OCI-LY7 (cell line): ENCODE measurements at regions of chr6 and their contacts with region 1.

Region 1: DNA sequence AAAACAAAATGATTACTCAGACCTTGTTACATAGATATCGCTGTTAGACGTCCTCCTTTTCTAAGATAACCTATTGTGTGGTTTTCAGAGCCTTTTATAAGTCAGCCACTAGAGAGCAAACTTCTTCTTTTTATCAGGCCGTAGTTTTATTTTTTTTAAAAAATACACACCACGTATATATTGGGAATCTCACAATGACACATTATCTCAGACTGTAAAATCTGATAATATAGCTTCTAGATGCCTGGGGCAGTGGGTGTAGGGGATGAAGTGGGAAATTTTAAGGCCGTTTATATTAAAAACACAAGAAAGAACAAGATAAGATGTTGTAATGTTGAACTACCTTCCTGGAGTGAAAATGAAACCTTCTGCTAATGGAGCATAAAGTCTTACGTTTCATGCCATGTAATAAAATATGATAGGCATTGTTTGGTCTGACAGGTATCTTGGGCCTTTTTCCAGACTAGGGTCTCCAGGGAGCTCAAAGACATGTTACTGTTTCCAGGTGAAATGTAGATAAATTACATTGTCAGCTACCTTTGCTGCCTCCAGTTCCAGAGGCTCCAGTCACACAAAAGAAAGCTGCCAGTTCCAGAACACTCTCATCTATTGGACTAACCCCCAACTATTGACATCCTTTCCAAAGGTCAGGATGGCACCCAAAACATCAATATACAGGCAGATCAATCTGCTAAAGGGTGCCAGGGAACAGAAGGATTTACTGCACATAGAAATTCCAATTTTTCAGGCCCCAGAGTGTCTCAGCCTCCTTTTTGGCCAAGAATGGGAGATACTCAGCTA is 130.2 kb upstream of the AKIRIN2 start:
- DNase-seq: peak; percentile 84
- H3K4me3 ChIP-seq: peak overlapping the region; percentile 42
- H3K27ac ChIP-seq: peak overlapping the region; percentile 81
- H3K4me1 ChIP-seq: peaks cover 68% of the 10 kb centered on the region
- CTCF ChIP-seq: peak; percentile 98

Region 2: DNA sequence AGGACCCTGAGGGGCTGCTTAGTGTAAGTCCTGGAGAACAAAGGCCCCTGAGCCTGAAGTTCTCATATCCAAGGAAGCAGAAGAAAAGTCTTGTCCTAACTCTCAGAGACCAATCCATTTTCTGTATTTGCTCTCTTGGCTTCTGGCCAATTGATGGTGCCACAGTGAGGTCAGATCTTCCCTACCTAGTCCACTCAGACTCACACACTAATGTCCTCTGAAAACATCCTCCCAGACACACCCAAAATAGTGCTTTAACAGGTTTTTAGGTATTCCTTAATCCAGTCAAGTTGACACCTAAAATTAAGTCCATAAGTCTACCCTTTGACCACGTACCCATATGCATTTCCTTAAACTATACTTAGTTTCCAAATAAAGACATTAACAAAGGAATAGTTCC is 647.4 kb before region 1 on chr6:
- CTCF ChIA-PET with region 1: no interaction called
- POLR2A ChIA-PET with region 1: no interaction called
- intact Hi-C with region 1: no loop called
- DNase-seq: no peak
- H3K4me3 ChIP-seq: no peak overlapping the region
- H3K27ac ChIP-seq: no peak overlapping the region
- H3K4me1 ChIP-seq: no peaks in the 10 kb centered on the region
- CTCF ChIP-seq: no peak

Region 3: DNA sequence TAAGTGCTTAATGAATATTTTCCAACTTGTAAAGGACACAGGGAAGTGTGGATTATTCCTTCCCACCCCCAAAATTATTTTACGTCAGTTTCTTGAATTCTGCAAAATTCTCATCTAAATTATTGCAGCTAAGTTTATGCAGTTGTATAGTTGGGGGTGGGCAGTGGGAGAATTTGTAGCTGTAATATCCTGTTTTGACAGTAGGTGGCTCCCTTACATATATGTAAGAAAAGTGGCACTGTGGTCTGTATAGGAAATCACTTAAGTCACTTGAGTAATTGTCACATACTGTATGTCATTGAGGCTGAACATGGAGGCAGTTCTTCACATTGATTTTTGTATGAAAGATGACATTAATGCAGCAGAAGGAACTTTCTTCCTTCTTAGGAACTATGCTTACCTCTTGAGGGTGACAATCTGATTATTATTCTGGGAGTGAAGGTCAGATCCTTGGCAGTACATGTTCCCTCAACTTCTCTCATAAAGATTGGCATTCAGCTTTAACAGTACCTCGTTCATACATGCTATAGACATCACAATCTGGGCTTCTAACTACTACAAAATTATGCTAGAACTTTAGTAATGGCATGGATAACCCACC is 439.1 kb before region 1 on chr6:
- CTCF ChIA-PET with region 1: no interaction called
- POLR2A ChIA-PET with region 1: interaction called, 4 read pairs
- intact Hi-C with region 1: loop called (anchors 1 kb)
- DNase-seq: peak; percentile 88
- H3K4me3 ChIP-seq: no peak overlapping the region
- H3K27ac ChIP-seq: no peak overlapping the region
- H3K4me1 ChIP-seq: peaks cover 19% of the 10 kb centered on the region
- CTCF ChIP-seq: peak; percentile 94

Region 4: GRCh38 chr6:87600576-87600975 is 231.6 kb before region 1 on chr6:
- CTCF ChIA-PET with region 1: no interaction called
- POLR2A ChIA-PET with region 1: no interaction called
- intact Hi-C with region 1: no loop called
- DNase-seq: no peak
- H3K4me3 ChIP-seq: no peak overlapping the region
- H3K27ac ChIP-seq: no peak overlapping the region
- H3K4me1 ChIP-seq: no peaks in the 10 kb centered on the region
- CTCF ChIP-seq: no peak

Region 5: GRCh38 chr6:87817183-87817582 is 15.0 kb before region 1 on chr6:
- CTCF ChIA-PET with region 1: no interaction called
- POLR2A ChIA-PET with region 1: interaction called, 14 read pairs
- intact Hi-C with region 1: no loop called
- DNase-seq: no peak
- H3K4me3 ChIP-seq: no peak overlapping the region
- H3K27ac ChIP-seq: no peak overlapping the region
- H3K4me1 ChIP-seq: no peaks in the 10 kb centered on the region
- CTCF ChIP-seq: no peak

Region 6: GRCh38 chr6:87907521-87907920 is 75.3 kb after region 1 on chr6:
- CTCF ChIA-PET with region 1: interaction called, 4 read pairs
- POLR2A ChIA-PET with region 1: interaction called, 111 read pairs
- intact Hi-C with region 1: loop called (anchors 1 kb)
- DNase-seq: peak; percentile 72
- H3K4me3 ChIP-seq: no peak overlapping the region
- H3K27ac ChIP-seq: peak overlapping the region; percentile 99
- H3K4me1 ChIP-seq: peaks cover 98% of the 10 kb centered on the region
- CTCF ChIP-seq: no peak

Region 7: GRCh38 chr6:88013015-88013414 is 180.8 kb after region 1 on chr6:
- CTCF ChIA-PET with region 1: no interaction called
- POLR2A ChIA-PET with region 1: no interaction called
- intact Hi-C with region 1: loop called (anchors 5 kb)
- DNase-seq: peak; percentile 84
- H3K4me3 ChIP-seq: peak overlapping the region; percentile 45
- H3K27ac ChIP-seq: peak overlapping the region; percentile 60
- H3K4me1 ChIP-seq: peaks cover 24% of the 10 kb centered on the region
- CTCF ChIP-seq: no peak

Region 8: GRCh38 chr6:88177961-88178464 is 345.8 kb after region 1 on chr6:
- CTCF ChIA-PET with region 1: interaction called, 3 read pairs
- POLR2A ChIA-PET with region 1: interaction called, 4 read pairs
- intact Hi-C with region 1: loop called (anchors 1 kb)
- DNase-seq: peak; percentile 91
- H3K4me3 ChIP-seq: peak overlapping the region; percentile 74
- H3K27ac ChIP-seq: peak overlapping the region; percentile 93
- H3K4me1 ChIP-seq: peaks cover 68% of the 10 kb centered on the region
- CTCF ChIP-seq: no peak

Region 9: DNA sequence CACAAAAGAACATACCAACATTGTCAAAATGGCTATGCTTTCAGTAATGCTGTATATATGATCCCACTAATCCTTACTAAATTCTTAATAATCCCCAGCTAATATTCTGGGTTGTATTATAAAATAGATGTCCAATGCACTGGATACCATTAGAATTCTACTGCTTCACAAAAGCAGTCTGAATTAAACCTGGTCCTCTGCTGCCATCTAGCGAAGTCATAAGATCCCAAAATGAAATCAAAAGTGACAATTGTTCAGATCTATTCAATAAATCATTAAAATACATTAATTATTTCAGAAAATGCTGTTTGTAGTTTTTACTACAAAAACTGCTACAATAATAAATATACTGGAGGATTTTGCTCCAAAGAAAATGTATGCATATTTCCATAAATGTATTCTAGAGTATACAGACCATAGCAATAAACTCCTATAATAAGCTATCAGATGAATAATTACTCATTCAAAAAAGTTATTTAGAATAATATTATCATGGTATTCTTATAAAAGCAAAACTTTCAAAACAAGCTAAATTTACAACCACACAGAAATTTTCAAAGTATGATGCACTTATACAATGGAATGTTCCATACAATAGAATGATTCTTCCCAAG is 1038.6 kb after region 1 on chr6:
- CTCF ChIA-PET with region 1: no interaction called
- POLR2A ChIA-PET with region 1: interaction called, 5 read pairs
- intact Hi-C with region 1: loop called (anchors 5 kb)
- DNase-seq: peak; percentile 79
- H3K4me3 ChIP-seq: no peak overlapping the region
- H3K27ac ChIP-seq: no peak overlapping the region
- H3K4me1 ChIP-seq: peaks cover 16% of the 10 kb centered on the region
- CTCF ChIP-seq: peak; percentile 96